ENCODE measurements at regions of chr20 and their contacts with region 1.

Region 1: DNA sequence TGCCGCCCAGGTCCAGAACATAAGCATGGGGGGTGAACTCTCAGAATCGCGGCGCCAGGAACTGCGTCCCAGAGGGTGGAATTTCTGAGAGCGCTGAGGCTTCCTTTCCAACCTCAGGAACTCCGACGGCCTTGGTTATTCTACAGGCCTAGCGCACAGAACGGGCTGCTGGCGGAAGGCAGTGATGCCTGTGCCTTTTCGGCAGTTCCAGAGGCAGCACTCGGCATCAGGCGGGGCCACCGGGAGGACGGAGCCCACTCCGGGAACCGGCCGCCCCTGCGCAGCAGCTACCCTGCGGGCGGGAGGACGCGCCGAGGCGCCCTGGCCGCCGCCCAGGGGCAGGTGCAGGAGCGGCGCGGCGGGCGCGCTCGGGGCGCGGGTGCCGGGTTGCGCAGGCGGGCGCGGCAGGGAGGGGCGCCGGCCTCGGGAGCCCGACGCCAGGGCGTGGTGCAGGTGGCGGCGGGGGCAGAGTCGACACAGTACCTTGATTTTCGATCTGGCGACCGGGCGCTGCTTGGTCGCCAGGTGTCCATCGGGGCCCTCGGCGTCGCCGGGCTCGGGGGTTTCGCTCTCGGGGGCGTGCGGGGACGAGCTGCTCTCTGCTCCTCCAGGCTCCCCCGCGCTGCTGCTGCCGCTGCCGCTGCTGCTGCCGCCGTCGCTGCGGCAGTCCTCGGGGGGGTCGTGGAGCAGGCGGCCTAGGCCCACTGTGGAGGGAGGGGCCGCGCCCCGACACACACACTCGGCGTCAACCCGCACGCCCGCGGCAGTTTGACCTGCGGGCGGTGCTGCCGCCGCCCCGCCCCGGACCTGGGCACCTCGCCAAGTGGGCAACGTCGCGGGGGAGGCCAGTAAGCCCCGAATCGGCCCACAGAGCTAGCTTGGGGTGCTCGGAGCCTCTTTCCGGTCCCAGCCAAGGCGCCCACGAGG is 1.3 kb downstream of the OVOL2 start:
- DNase-seq: peak in 1 of 2 experiments; percentile 70
- H3K4me3 ChIP-seq: peak overlapping the region; percentile 95
- H3K27ac ChIP-seq: no peak overlapping the region
- H3K4me1 ChIP-seq: peaks cover 52% of the 10 kb centered on the region
- H3K27me3 ChIP-seq: no peaks in the 10 kb centered on the region
- CTCF ChIP-seq: no peak

Region 2: GRCh38 chr20:17710379-17711266 is 345.8 kb before region 1 on chr20:
- CTCF ChIA-PET with region 1: no interaction called
- POLR2A ChIA-PET with region 1: no interaction called
- intact Hi-C with region 1: no loop called
- DNase-seq: no peak
- H3K4me3 ChIP-seq: no peak overlapping the region
- H3K27ac ChIP-seq: no peak overlapping the region
- H3K4me1 ChIP-seq: no peaks in the 10 kb centered on the region
- H3K27me3 ChIP-seq: no peaks in the 10 kb centered on the region; the same call in 1 of the 2 replicates
- CTCF ChIP-seq: no peak

Region 3: GRCh38 chr20:17762243-17762877 is 294.1 kb before region 1 on chr20:
- CTCF ChIA-PET with region 1: no interaction called
- POLR2A ChIA-PET with region 1: interaction called, 12 read pairs
- intact Hi-C with region 1: no loop called
- DNase-seq: peak in 1 of 2 experiments; percentile 1
- H3K4me3 ChIP-seq: no peak overlapping the region
- H3K27ac ChIP-seq: no peak overlapping the region
- H3K4me1 ChIP-seq: peaks cover 11% of the 10 kb centered on the region
- H3K27me3 ChIP-seq: no peaks in the 10 kb centered on the region; the same call in 1 of the 2 replicates
- CTCF ChIP-seq: no peak

Region 4: GRCh38 chr20:17878912-17879602 is 177.4 kb before region 1 on chr20:
- CTCF ChIA-PET with region 1: no interaction called
- POLR2A ChIA-PET with region 1: no interaction called
- intact Hi-C with region 1: no loop called
- DNase-seq: no peak
- H3K4me3 ChIP-seq: no peak overlapping the region
- H3K27ac ChIP-seq: no peak overlapping the region
- H3K4me1 ChIP-seq: no peaks in the 10 kb centered on the region
- H3K27me3 ChIP-seq: no peaks in the 10 kb centered on the region
- CTCF ChIP-seq: no peak

Region 5: DNA sequence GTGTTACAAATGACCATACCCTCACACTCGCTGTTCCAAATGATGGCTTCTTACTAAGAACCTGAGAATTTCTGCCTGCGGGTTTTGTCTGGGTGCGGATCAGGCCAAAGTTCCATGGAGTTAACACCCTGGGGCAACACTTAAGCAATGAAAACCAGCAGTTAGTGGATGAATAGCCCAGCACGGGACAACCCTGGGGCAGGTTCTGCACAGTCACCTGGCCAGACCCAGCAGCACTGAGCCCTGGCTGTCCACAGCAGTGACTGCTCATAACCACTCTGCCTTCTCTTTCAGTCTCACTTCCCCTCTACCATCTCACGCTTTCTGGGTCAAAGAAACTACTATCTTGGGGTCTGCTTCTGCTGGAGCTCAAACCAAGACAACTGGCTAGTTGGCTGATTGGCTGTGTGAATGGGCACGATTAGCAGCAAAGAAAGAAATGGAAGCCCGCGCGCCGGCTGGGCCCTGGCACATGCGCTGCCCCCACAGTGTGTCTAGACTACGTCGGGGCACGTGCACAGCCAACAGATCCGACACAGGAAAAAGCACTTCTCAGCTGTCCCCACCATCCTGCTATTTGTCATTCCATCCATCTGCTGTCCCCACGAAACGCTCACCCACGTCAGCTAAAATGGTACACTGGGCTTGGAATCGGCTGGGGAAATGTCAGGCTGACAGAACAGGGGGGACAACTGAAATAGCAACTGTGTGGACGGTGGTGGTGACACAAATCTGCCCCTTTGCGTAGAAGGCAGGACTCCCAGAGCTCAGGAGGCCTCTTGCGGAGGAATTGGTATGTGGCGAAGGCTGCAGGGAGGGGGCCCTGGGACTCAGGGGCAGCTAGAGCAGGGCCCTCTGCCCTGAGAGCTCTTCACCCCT is 51.0 kb before region 1 on chr20:
- CTCF ChIA-PET with region 1: interaction called, 5 read pairs
- POLR2A ChIA-PET with region 1: no interaction called
- intact Hi-C with region 1: loop called (anchors 5 kb)
- DNase-seq: peak; percentile 80 to 96
- H3K4me3 ChIP-seq: no peak overlapping the region
- H3K27ac ChIP-seq: peak overlapping the region; percentile 78
- H3K4me1 ChIP-seq: peaks cover 43% of the 10 kb centered on the region
- H3K27me3 ChIP-seq: no peaks in the 10 kb centered on the region
- CTCF ChIP-seq: no peak

Region 6: DNA sequence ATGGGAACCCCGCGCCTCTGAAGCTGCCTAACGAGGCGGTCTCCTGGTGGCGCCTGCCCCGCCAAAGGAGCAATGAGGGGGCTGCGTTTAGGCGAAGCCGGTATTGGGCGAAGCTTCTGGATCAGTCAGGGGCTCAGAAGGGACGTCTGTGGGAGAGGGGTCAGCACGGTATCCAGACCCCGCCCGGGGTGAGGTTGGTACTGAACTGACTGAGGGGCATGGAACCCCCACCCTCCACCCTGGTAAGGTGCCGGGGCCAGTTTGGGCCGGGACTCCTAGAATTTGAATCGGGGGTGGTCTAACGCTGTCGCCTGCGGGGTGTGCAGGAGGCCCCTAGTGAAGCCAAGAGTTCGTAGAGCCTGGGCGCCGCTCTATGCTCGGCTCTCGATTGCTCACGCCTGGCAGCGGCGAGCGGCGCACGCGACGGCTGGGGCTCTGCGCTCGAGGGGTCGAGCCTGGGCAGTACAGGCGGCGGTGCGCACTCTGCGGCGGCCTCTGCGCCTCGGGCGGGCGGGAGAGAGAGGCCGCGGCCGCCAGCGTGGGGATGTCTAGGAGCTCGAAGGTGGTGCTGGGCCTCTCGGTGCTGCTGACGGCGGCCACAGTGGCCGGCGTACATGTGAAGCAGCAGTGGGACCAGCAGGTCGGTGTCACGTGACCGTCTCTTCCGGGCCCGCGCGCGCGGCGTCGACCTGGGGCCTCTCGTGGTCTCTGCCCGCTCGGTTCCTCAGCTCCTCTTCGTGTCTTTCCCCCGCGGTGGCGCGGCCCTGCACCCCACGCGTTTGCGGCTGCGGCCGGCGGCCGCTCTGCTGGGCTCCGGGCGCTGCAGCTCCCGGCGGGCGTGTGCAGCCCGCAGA is 81.2 kb after region 1 on chr20 and contains the starts of genes KAT14 and PET117:
- CTCF ChIA-PET with region 1: interaction called, 4 read pairs
- POLR2A ChIA-PET with region 1: no interaction called
- intact Hi-C with region 1: loop called (anchors 2 kb)
- DNase-seq: peak; percentile 74 to 94
- H3K4me3 ChIP-seq: peak within 1 kb of the TSS; percentile 96
- H3K27ac ChIP-seq: peak within 1 kb of the TSS; percentile 64
- H3K4me1 ChIP-seq: peaks cover 24% of the 10 kb centered on the region
- H3K27me3 ChIP-seq: no peaks in the 10 kb centered on the region
- CTCF ChIP-seq: no peak
- total RNA-seq, gene KAT14: 28.4 and 30.6 TPM in 2 replicates
- total RNA-seq, gene PET117: 27.5 and 34.7 TPM in 2 replicates

Region 7: DNA sequence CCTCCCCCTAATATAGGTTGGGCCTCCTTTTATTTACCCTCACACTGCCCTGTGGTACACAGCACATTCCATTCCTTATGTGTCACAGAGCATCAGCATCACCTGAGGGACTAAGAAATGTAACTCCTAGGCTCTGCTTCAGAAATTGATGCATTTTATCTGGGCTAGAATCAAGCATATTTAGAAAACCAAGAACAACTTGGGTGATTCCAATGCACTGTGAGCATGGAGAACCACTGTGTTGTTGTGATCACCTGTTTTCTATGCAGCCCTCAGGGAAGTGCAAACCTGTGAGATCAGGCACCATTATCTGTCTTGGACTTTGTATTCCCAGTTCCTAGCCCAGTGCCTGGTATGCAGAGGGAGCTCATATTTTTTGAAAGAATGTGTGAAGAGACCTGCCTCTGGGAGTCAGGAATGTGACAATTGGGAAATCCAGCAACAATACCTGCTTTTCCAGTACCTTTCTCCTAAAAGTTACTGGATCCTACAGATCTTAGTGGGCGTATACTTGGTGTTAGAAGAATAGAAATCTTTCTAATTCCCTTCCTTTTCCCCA is 88.2 kb after region 1 on chr20:
- CTCF ChIA-PET with region 1: interaction called, 4 read pairs
- POLR2A ChIA-PET with region 1: no interaction called
- intact Hi-C with region 1: loop called (anchors 2 kb)
- DNase-seq: peak; percentile 64 to 94
- H3K4me3 ChIP-seq: peak overlapping the region; percentile 55; the same call in 1 of the 2 replicates
- H3K27ac ChIP-seq: peak overlapping the region; percentile 93
- H3K4me1 ChIP-seq: peaks cover 62% of the 10 kb centered on the region
- H3K27me3 ChIP-seq: no peaks in the 10 kb centered on the region
- CTCF ChIP-seq: no peak

Region 8: GRCh38 chr20:18224968-18225568 is 168.6 kb after region 1 on chr20:
- CTCF ChIA-PET with region 1: interaction called, 3 read pairs
- POLR2A ChIA-PET with region 1: interaction called, 17 read pairs
- intact Hi-C with region 1: no loop called
- DNase-seq: peak; percentile 68 to 77
- H3K4me3 ChIP-seq: peak overlapping the region; percentile 33; the same call in 1 of the 2 replicates
- H3K27ac ChIP-seq: peak overlapping the region; percentile 49
- H3K4me1 ChIP-seq: peaks cover 37% of the 10 kb centered on the region
- H3K27me3 ChIP-seq: no peaks in the 10 kb centered on the region
- CTCF ChIP-seq: no peak

Region 9: GRCh38 chr20:18252597-18253451 is 196.4 kb after region 1 on chr20:
- CTCF ChIA-PET with region 1: interaction called, 7 read pairs
- POLR2A ChIA-PET with region 1: no interaction called
- intact Hi-C with region 1: loop called (anchors 1 kb)
- DNase-seq: peak; percentile 95 to 100
- H3K4me3 ChIP-seq: peak overlapping the region; percentile 34; the same call in 1 of the 2 replicates
- H3K27ac ChIP-seq: peak overlapping the region; percentile 96
- H3K4me1 ChIP-seq: peaks cover 40% of the 10 kb centered on the region
- H3K27me3 ChIP-seq: no peaks in the 10 kb centered on the region
- CTCF ChIP-seq: no peak

Measured in PC-9 (cell line).